Activated naive CD4-positive, alpha-beta T cell treated with anti-CD3 and anti-CD28 coated beads for 36 hours (primary cell): ENCODE measurements at regions of chr14 and their contacts with region 1.

Region 1: GRCh38 chr14:23286020-23286905 is at the start of gene HOMEZ:
- DNase-seq: peak; percentile 99
- H3K4me3 Mint-ChIP-seq: peak within 1 kb of the TSS; percentile 99
- H3K27ac Mint-ChIP-seq: peak within 1 kb of the TSS; percentile 96
- H3K4me1 Mint-ChIP-seq: peaks cover 29% of the 10 kb centered on the region
- H3K27me3 Mint-ChIP-seq: no peaks in the 10 kb centered on the region
- total RNA-seq, gene HOMEZ: 6.3 to 7.8 TPM

Region 2: GRCh38 chr14:22598099-22598899 is 688.0 kb before region 1 on chr14 and contains the start of gene ABHD4:
- CTCF ChIA-PET with region 1: no interaction called
- intact Hi-C with region 1: no loop called
- DNase-seq: peak; percentile 75
- H3K4me3 Mint-ChIP-seq: peak within 1 kb of the TSS; percentile 90
- H3K27ac Mint-ChIP-seq: peak within 1 kb of the TSS; percentile 72
- H3K4me1 Mint-ChIP-seq: peaks cover 28% of the 10 kb centered on the region
- H3K27me3 Mint-ChIP-seq: no peaks in the 10 kb centered on the region
- total RNA-seq, gene ABHD4: 11.1 to 11.9 TPM

Region 3: GRCh38 chr14:23237772-23238594 is 48.3 kb before region 1 on chr14 and contains the start of gene RNF212B:
- CTCF ChIA-PET with region 1: no interaction called
- intact Hi-C with region 1: loop called (anchors 2 kb)
- DNase-seq: peak; percentile 92
- H3K4me3 Mint-ChIP-seq: peak within 1 kb of the TSS; percentile 65
- H3K27ac Mint-ChIP-seq: no peak within 1 kb of the TSS
- H3K4me1 Mint-ChIP-seq: peaks cover 5% of the 10 kb centered on the region
- H3K27me3 Mint-ChIP-seq: peaks cover 10% of the 10 kb centered on the region
- total RNA-seq, gene RNF212B: not detected

Region 4: GRCh38 chr14:23252420-23253333 is 33.6 kb before region 1 on chr14:
- CTCF ChIA-PET with region 1: no interaction called
- intact Hi-C with region 1: no loop called
- DNase-seq: no peak
- H3K4me3 Mint-ChIP-seq: no peak overlapping the region
- H3K27ac Mint-ChIP-seq: no peak overlapping the region
- H3K4me1 Mint-ChIP-seq: no peaks in the 10 kb centered on the region
- H3K27me3 Mint-ChIP-seq: peaks cover 12% of the 10 kb centered on the region

Region 5: GRCh38 chr14:23269193-23269592 is 17.1 kb before region 1 on chr14:
- CTCF ChIA-PET with region 1: interaction called, 3 read pairs
- intact Hi-C with region 1: loop called (anchors 1 kb)
- DNase-seq: no peak
- H3K4me3 Mint-ChIP-seq: no peak overlapping the region
- H3K27ac Mint-ChIP-seq: no peak overlapping the region
- H3K4me1 Mint-ChIP-seq: no peaks in the 10 kb centered on the region
- H3K27me3 Mint-ChIP-seq: no peaks in the 10 kb centered on the region

Region 6: DNA sequence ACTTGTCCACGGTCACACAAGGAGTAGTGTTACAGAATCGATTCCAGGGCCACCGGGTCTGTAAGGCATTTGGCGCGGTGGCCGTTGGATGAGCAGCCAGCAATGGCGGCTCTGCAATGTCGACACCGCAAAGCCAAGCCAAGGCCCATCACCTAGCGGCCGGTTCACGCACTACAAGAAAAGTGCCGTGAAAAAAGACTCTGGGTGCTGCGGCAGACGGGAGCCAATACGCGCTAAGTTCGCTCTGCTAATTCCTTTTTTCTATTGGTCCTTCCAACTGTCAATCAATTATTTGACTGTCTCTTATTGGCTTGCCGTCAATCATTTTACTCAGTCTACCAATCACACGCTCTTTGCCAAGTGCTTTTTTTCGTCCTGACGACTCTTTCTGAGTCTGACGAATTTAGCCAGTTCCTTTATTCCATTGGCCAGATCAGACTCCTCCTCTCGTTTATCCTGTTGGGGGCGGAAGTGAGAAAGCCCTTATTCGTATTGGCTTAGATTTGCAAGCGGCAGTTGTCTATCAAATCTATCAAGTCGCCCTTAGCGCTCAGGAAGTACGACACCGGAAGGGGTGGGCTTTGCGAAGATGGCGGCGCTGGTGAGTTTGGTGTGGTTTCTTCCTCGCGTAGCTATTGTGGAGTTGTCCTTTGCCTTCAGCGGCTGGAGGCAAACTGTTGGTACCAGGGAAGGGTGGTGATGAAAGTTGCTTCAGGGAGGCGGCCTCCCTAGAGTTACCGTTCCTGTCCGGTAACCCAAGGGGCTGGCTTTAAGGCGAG is 183.1 kb after region 1 on chr14 and contains the start of gene NGDN:
- CTCF ChIA-PET with region 1: no interaction called
- intact Hi-C with region 1: loop called (anchors 1 kb)
- DNase-seq: peak; percentile 96
- H3K4me3 Mint-ChIP-seq: no peak within 1 kb of the TSS
- H3K27ac Mint-ChIP-seq: no peak within 1 kb of the TSS
- H3K4me1 Mint-ChIP-seq: peaks cover 11% of the 10 kb centered on the region
- H3K27me3 Mint-ChIP-seq: no peaks in the 10 kb centered on the region
- total RNA-seq, gene NGDN: 38.9 to 40.8 TPM